PC-9 (cell line): ENCODE measurements at regions of chr3 and their contacts with region 1.

Region 1: GRCh38 chr3:114104414-114104813 is 47.9 kb downstream of the QTRT2 start:
- DNase-seq: no peak
- H3K4me3 ChIP-seq: no peak overlapping the region
- H3K27ac ChIP-seq: no peak overlapping the region
- H3K4me1 ChIP-seq: no peaks in the 10 kb centered on the region
- H3K27me3 ChIP-seq: no peaks in the 10 kb centered on the region
- CTCF ChIP-seq: no peak

Region 2: DNA sequence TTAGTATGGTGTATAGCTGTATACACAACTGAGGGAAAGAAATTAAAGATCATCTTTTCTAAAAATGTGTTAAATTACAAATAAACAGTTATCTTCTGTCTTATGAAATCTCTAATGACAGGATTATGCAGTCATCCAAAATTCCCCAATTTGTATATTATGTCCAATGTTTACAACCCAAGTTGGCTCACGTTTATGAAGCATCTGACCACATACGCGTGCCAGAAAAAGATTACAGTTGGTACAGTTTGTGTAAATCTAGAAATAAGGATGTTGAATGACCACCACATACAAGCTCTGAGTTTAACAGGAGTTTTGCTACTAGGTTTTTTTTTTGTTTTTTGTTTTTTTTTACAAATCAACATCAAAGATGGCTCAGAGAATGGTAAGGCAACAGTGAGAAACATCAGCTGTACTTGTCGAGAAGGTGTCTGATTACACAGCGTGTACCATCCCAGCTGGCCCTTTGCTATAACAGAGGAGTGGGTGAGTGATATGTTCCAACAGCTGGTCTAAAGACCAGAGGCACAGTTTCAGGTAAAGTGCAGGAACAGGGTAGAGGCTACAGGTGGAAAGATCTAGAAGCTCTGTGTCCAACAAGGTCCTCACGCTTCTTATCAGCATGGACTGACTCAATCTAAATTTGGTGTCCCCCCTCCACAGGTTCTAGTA is 455.1 kb before region 1 on chr3:
- CTCF ChIA-PET with region 1: no interaction called
- POLR2A ChIA-PET with region 1: no interaction called
- intact Hi-C with region 1: no loop called
- DNase-seq: no peak
- H3K4me3 ChIP-seq: no peak overlapping the region
- H3K27ac ChIP-seq: no peak overlapping the region
- H3K4me1 ChIP-seq: no peaks in the 10 kb centered on the region
- H3K27me3 ChIP-seq: no peaks in the 10 kb centered on the region
- CTCF ChIP-seq: no peak

Region 3: DNA sequence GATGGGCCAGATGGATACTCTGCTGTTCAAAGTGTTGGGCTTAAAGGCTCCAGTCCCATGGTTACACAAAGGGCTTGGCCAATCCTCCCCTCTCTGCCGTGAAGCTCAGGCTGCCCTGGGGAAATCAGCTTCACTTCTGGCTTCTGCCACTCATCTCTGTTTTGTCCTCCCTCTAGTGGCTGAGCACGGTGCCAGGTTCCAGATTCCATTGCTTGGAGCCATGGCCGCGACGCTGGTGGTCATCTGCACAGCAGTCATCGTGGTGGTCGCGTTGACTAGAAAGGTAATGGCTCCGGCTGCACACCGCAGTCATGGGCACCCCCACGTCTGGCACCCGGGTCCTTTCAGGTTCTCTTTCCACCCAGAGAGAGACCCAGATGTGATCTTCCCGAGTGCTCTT is 195.0 kb after region 1 on chr3:
- CTCF ChIA-PET with region 1: interaction called, 11 read pairs
- POLR2A ChIA-PET with region 1: no interaction called
- intact Hi-C with region 1: no loop called
- DNase-seq: peak in 1 of 2 experiments; percentile 7
- H3K4me3 ChIP-seq: no peak overlapping the region
- H3K27ac ChIP-seq: no peak overlapping the region
- H3K4me1 ChIP-seq: no peaks in the 10 kb centered on the region
- H3K27me3 ChIP-seq: no peaks in the 10 kb centered on the region; the same call in 1 of the 2 replicates
- CTCF ChIP-seq: peak; percentile 42; the same call in 1 of the 2 replicates

Region 4: GRCh38 chr3:115272036-115272824 is 1167.8 kb after region 1 on chr3:
- CTCF ChIA-PET with region 1: no interaction called
- POLR2A ChIA-PET with region 1: no interaction called
- intact Hi-C with region 1: no loop called
- DNase-seq: no peak
- H3K4me3 ChIP-seq: no peak overlapping the region
- H3K27ac ChIP-seq: no peak overlapping the region
- H3K4me1 ChIP-seq: no peaks in the 10 kb centered on the region
- H3K27me3 ChIP-seq: no peaks in the 10 kb centered on the region
- CTCF ChIP-seq: no peak